Ovary (tissue), 10 donors: ENCODE measurements at regions of chr3 and their contacts with region 1.

Region 1: GRCh38 chr3:2023959-2024358 is 74.7 kb upstream of the CNTN4 start:
- DNase-seq: no peak
- H3K4me3 ChIP-seq: no peak overlapping the region
- H3K27ac ChIP-seq: no peak overlapping the region
- H3K4me1 ChIP-seq: no peaks in the 10 kb centered on the region
- H3K27me3 ChIP-seq: no peaks in the 10 kb centered on the region
- CTCF ChIP-seq: no peak
- EP300 ChIP-seq: no peak
- POLR2A ChIP-seq: no peak

Region 2: GRCh38 chr3:1092771-1093170 is 931.2 kb before region 1 on chr3 and contains the start of gene CNTN6:
- intact Hi-C with region 1: no loop called
- DNase-seq: no peak
- H3K4me3 ChIP-seq: no peak within 1 kb of the TSS
- H3K27ac ChIP-seq: no peak within 1 kb of the TSS
- H3K4me1 ChIP-seq: no peaks in the 10 kb centered on the region
- H3K27me3 ChIP-seq: no peaks in the 10 kb centered on the region
- CTCF ChIP-seq: no peak
- EP300 ChIP-seq: no peak
- POLR2A ChIP-seq: no peak
- total RNA-seq, gene CNTN6: 0.23 TPM in 1 of 7 donors, not detected in the others

Region 3: GRCh38 chr3:1792466-1792865 is 231.5 kb before region 1 on chr3:
- intact Hi-C with region 1: no loop called
- DNase-seq: no peak
- H3K4me3 ChIP-seq: no peak overlapping the region
- H3K27ac ChIP-seq: no peak overlapping the region
- H3K4me1 ChIP-seq: no peaks in the 10 kb centered on the region
- H3K27me3 ChIP-seq: no peaks in the 10 kb centered on the region
- CTCF ChIP-seq: no peak
- EP300 ChIP-seq: no peak
- POLR2A ChIP-seq: no peak

Region 4: GRCh38 chr3:2082871-2083480 is 59.0 kb after region 1 on chr3:
- intact Hi-C with region 1: no loop called
- DNase-seq: no peak
- H3K4me3 ChIP-seq: no peak overlapping the region
- H3K27ac ChIP-seq: no peak overlapping the region
- H3K4me1 ChIP-seq: no peaks in the 10 kb centered on the region
- H3K27me3 ChIP-seq: no peaks in the 10 kb centered on the region
- CTCF ChIP-seq: no peak
- EP300 ChIP-seq: no peak
- POLR2A ChIP-seq: no peak

Region 5: GRCh38 chr3:3082234-3082924 is 1058.4 kb after region 1 on chr3:
- intact Hi-C with region 1: loop called in 1 of 4 experiments (anchors 5 kb)
- DNase-seq: no peak
- H3K4me3 ChIP-seq: no peak overlapping the region
- H3K27ac ChIP-seq: no peak overlapping the region
- H3K4me1 ChIP-seq: no peaks in the 10 kb centered on the region
- H3K27me3 ChIP-seq: no peaks in the 10 kb centered on the region
- CTCF ChIP-seq: no peak
- EP300 ChIP-seq: no peak
- POLR2A ChIP-seq: no peak